PC-9 (cell line): ENCODE measurements at regions of chr3 and their contacts with region 1.

Region 1: DNA sequence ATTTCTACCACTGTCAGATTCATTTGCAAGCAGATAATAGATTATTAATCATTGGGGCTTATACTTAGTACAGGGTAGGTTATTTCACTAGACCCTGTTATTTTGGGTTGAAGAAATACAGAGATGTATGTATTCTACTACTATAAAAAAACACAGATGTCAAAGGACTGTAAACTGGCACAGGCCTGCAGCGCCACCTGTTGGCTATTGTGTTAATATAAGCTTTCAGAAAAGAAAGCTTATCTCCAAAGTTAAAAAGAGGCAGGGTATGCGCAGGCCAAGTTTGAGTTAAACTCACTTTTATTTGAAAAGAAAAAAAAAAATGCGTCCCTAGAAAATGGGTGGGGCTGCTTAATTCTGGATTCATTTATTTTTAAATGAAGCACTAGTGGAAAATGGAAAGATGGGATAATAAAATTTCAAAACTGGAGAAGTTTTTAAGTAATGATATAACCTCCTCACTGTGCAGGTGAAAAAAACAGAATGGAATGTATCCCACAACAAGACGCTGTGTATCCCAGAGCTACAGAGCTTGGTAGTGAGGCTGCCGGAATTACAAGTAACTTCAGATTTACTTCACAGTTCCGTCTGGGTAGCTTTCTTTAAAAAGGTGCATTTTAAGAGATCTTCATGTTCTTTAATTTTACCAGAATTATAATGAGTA is 407.2 kb upstream of the TGFBR2 start:
- DNase-seq: peak in 1 of 2 experiments; percentile 30
- H3K4me3 ChIP-seq: no peak overlapping the region
- H3K27ac ChIP-seq: no peak overlapping the region
- H3K4me1 ChIP-seq: no peaks in the 10 kb centered on the region
- H3K27me3 ChIP-seq: no peaks in the 10 kb centered on the region
- CTCF ChIP-seq: peak; percentile 78

Region 2: GRCh38 chr3:28634019-28634418 is 1565.2 kb before region 1 on chr3:
- CTCF ChIA-PET with region 1: no interaction called
- POLR2A ChIA-PET with region 1: no interaction called
- intact Hi-C with region 1: no loop called
- DNase-seq: no peak
- H3K4me3 ChIP-seq: no peak overlapping the region
- H3K27ac ChIP-seq: no peak overlapping the region
- H3K4me1 ChIP-seq: no peaks in the 10 kb centered on the region
- H3K27me3 ChIP-seq: no peaks in the 10 kb centered on the region
- CTCF ChIP-seq: no peak

Region 3: DNA sequence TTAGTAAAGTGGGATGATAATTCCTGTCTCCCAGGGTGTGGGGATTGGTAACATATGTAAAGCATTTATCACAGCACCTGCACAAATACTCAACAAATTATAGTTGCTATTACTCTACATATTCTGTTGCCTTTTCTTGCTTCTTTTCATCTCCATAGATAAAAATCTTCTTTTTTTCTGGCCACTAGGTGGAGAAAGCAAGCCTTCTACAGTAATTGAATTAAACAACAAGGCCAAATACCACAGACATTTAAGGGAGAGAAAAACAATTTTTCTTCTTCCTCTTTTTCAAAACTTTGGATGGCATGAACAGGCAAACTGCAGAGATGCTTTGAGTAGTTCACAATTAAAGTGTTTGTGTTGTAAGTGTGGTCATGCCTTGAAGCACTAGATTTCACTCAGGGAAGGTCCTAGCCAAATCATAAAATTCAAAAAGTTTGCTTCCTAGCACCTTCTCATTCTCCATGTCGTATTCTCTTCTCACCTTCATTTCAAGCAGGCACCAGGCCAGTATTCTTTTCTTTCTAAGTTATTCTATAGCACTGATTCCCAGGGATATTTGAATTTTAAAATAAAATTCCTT is 86.2 kb before region 1 on chr3:
- CTCF ChIA-PET with region 1: interaction called, 3 read pairs
- POLR2A ChIA-PET with region 1: no interaction called
- intact Hi-C with region 1: loop called (anchors 2 kb)
- DNase-seq: no peak
- H3K4me3 ChIP-seq: no peak overlapping the region
- H3K27ac ChIP-seq: no peak overlapping the region
- H3K4me1 ChIP-seq: no peaks in the 10 kb centered on the region
- H3K27me3 ChIP-seq: no peaks in the 10 kb centered on the region
- CTCF ChIP-seq: peak; percentile 71

Region 4: DNA sequence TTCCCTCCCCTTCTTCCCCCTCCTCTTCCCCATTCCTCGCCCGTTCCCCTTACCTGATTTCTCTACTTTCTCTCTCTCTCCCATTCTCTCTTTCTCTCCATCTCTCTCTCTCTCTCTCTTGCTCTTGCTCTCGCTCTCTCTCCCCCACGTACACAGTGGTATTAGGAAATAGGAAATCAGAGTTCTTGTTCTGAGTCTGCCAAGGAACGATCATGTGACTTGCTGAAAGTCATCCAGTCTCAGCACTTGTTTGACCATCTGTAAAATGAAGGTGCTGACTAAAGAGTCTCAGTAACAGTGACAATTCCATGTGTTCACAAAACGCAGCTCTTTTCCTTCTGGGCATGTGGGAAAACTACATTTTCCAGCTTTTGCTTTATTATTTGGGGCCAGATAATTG is 37.9 kb before region 1 on chr3:
- CTCF ChIA-PET with region 1: no interaction called
- POLR2A ChIA-PET with region 1: no interaction called
- intact Hi-C with region 1: no loop called
- DNase-seq: no peak
- H3K4me3 ChIP-seq: no peak overlapping the region
- H3K27ac ChIP-seq: no peak overlapping the region
- H3K4me1 ChIP-seq: no peaks in the 10 kb centered on the region
- H3K27me3 ChIP-seq: no peaks in the 10 kb centered on the region
- CTCF ChIP-seq: no peak

Region 5: DNA sequence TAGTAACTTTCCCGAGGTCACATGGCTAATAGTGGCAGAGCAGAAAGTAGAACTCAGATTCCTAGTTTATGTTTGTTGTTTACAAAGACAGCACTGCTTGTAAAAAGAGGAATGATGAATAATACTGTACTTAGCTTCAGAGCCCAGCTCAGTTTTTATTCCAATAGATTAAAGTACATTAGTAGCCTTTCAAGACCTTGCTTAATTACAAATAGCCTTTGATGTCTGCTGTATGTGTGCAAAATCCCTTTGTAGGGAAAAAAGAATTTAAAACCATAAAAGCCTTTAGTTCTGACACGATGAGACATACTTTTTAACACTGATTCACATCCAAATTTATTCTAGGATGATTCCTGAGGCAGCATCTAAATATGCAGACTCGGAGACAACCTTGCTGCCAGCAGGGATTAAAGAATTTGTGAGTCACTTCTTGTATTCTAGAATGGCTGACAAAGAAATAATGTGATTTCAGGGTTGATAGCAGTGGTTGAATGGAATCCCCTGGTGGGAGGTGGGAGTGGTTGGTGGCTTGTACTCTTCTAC is 83.0 kb after region 1 on chr3:
- CTCF ChIA-PET with region 1: no interaction called
- POLR2A ChIA-PET with region 1: no interaction called
- intact Hi-C with region 1: loop called (anchors 5 kb)
- DNase-seq: peak in 1 of 2 experiments; percentile 12
- H3K4me3 ChIP-seq: no peak overlapping the region
- H3K27ac ChIP-seq: no peak overlapping the region
- H3K4me1 ChIP-seq: no peaks in the 10 kb centered on the region
- H3K27me3 ChIP-seq: no peaks in the 10 kb centered on the region
- CTCF ChIP-seq: no peak